T-cell (primary cell): ENCODE measurements at regions of chr15 and their contacts with region 1.

Region 1: GRCh38 chr15:38690689-38691332 is 126.2 kb upstream of the RASGRP1 start:
- DNase-seq: peak; percentile 56 to 94 (median 75)
- ATAC-seq: peak; percentile 25 to 28 (median 27)
- H3K4me3 ChIP-seq: no peak overlapping the region
- H3K4me3 Mint-ChIP-seq: peak overlapping the region in 1 of 3 donors; percentile 48
- H3K27ac ChIP-seq: no peak overlapping the region
- H3K27ac Mint-ChIP-seq: peak overlapping the region; percentile 91 to 98
- H3K4me1 ChIP-seq: peaks cover 53 to 58% of the 10 kb centered on the region in 2 experiments
- H3K4me1 Mint-ChIP-seq: peaks cover 65 to 83% (median 75%) of the 10 kb centered on the region in 3 donors
- H3K27me3 ChIP-seq: no peaks in the 10 kb centered on the region
- H3K27me3 Mint-ChIP-seq: no peaks in the 10 kb centered on the region

Region 2: GRCh38 chr15:38440353-38441129 is 250.3 kb before region 1 on chr15:
- CTCF ChIA-PET with region 1: interaction called in 1 of 2 experiments, 27 read pairs
- POLR2A ChIA-PET with region 1: interaction called in 1 of 2 experiments, 4 read pairs
- DNase-seq: peak in 34 of 35 experiments; percentile 12 to 88 (median 33)
- ATAC-seq: peak; percentile 82 to 91 (median 88)
- H3K4me3 ChIP-seq: no peak overlapping the region
- H3K4me3 Mint-ChIP-seq: no peak overlapping the region
- H3K27ac ChIP-seq: no peak overlapping the region
- H3K27ac Mint-ChIP-seq: no peak overlapping the region
- H3K4me1 ChIP-seq: peaks cover 0 to 5% of the 10 kb centered on the region in 2 experiments
- H3K4me1 Mint-ChIP-seq: peaks cover 5 to 9% (median 8%) of the 10 kb centered on the region in 3 donors
- H3K27me3 ChIP-seq: peaks cover 0 to 2% of the 10 kb centered on the region in 2 experiments
- H3K27me3 Mint-ChIP-seq: peaks cover 21 to 25% of the 10 kb centered on the region in 2 donors

Region 3: GRCh38 chr15:38521316-38521715 is 169.5 kb before region 1 on chr15:
- CTCF ChIA-PET with region 1: interaction called, 3 to 12 read pairs
- POLR2A ChIA-PET with region 1: interaction called in 1 of 2 experiments, 3 read pairs
- DNase-seq: no peak
- ATAC-seq: peak in 1 of 4 experiments; percentile 26
- H3K4me3 ChIP-seq: no peak overlapping the region
- H3K4me3 Mint-ChIP-seq: no peak overlapping the region
- H3K27ac ChIP-seq: no peak overlapping the region
- H3K27ac Mint-ChIP-seq: peak overlapping the region; percentile 66 to 84
- H3K4me1 ChIP-seq: peaks cover 0 to 3% of the 10 kb centered on the region in 2 experiments
- H3K4me1 Mint-ChIP-seq: peaks cover 46 to 62% (median 58%) of the 10 kb centered on the region in 3 donors
- H3K27me3 ChIP-seq: no peaks in the 10 kb centered on the region
- H3K27me3 Mint-ChIP-seq: no peaks in the 10 kb centered on the region

Region 4: GRCh38 chr15:38540510-38540909 is 150.3 kb before region 1 on chr15:
- CTCF ChIA-PET with region 1: interaction called, 4 to 19 read pairs
- POLR2A ChIA-PET with region 1: interaction called, 3 to 4 read pairs
- DNase-seq: no peak
- ATAC-seq: no peak
- H3K4me3 ChIP-seq: no peak overlapping the region
- H3K4me3 Mint-ChIP-seq: peak overlapping the region in 2 of 3 donors; percentile 1 to 39
- H3K27ac ChIP-seq: peak overlapping the region; percentile 38
- H3K27ac Mint-ChIP-seq: peak overlapping the region; percentile 79 to 83
- H3K4me1 ChIP-seq: peaks cover 65 to 67% of the 10 kb centered on the region in 2 experiments
- H3K4me1 Mint-ChIP-seq: peaks cover 95 to 96% (median 96%) of the 10 kb centered on the region in 3 donors
- H3K27me3 ChIP-seq: no peaks in the 10 kb centered on the region
- H3K27me3 Mint-ChIP-seq: no peaks in the 10 kb centered on the region

Region 5: DNA sequence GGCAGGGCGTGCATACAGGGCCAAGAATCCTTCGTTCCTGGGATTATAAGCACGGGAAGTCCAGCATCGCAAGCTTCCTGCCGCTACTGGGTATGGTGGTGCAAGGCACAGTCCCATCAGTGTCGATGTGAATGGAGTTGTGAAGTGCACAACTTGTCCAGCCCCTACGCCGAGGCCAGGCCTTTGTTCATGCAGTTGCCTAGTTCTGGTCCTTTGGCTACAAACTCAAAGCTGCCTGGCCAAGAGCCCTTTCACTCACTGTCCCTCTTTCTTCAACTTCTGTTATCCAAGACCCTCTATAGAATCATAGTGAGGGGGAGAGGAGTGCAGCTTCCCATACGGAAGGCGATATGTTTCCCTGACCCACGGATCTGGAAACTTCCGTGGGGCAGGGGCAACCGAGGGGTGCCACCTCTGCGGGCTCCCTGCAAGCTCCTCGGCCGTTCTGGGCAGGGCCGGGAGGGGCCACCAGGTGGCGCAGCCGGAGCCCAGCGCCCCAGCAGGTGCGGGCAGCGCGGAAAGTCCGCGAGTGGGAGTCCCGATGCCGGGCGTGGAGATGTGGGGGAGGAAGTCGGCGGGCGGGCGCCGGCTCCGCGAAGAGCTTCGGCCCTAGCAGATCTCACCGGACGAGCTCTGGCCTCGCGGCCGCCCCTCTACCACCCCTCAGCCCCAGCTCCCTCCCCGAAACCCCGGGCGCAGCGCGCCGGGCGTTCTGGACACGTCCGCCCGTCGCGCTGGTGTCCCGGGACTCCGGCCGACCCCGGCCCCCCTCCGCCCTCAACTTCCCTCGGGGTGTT is 126.9 kb before region 1 on chr15:
- CTCF ChIA-PET with region 1: interaction called, 96 to 249 read pairs
- POLR2A ChIA-PET with region 1: interaction called, 4 to 6 read pairs
- DNase-seq: peak; percentile 65 to 92 (median 82)
- ATAC-seq: peak; percentile 75 to 77 (median 76)
- H3K4me3 ChIP-seq: peak overlapping the region; percentile 90
- H3K4me3 Mint-ChIP-seq: peak overlapping the region; percentile 87 to 96 (median 88)
- H3K27ac ChIP-seq: peak overlapping the region; percentile 83
- H3K27ac Mint-ChIP-seq: peak overlapping the region; percentile 94 to 98
- H3K4me1 ChIP-seq: peaks cover 40 to 51% of the 10 kb centered on the region in 2 experiments
- H3K4me1 Mint-ChIP-seq: peaks cover 58 to 65% (median 64%) of the 10 kb centered on the region in 3 donors
- H3K27me3 ChIP-seq: no peaks in the 10 kb centered on the region
- H3K27me3 Mint-ChIP-seq: no peaks in the 10 kb centered on the region

Region 6: DNA sequence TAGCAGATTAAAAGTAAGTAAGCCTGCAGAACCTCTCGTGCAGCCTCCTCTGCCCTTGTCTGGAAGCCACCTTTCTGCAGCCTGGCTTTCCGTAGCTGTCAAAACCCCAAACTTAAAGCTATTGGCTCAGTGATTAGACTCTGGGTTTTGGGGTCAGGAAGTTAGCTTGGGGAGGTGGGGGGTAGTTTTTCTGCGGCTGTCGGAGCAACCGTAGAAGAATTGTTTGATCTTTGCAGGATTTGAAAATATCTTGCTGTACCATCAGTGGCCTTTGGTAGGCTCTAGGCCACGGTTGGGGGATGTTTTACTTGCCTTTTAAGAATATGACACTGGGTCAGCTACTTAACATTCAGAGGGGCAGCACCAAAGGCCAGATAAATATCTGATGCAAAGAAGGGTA is 37.8 kb before region 1 on chr15:
- CTCF ChIA-PET with region 1: interaction called, 12 to 90 read pairs
- POLR2A ChIA-PET with region 1: interaction called, 9 to 11 read pairs
- DNase-seq: peak; percentile 54 to 94 (median 80)
- ATAC-seq: peak; percentile 77 to 83 (median 80)
- H3K4me3 ChIP-seq: peak overlapping the region in 1 of 2 donors; percentile 20
- H3K4me3 Mint-ChIP-seq: peak overlapping the region; percentile 69 to 85 (median 78)
- H3K27ac ChIP-seq: peak overlapping the region; percentile 55
- H3K27ac Mint-ChIP-seq: peak overlapping the region; percentile 98
- H3K4me1 ChIP-seq: peaks cover 61 to 63% of the 10 kb centered on the region in 2 experiments
- H3K4me1 Mint-ChIP-seq: peaks cover 75 to 84% (median 81%) of the 10 kb centered on the region in 3 donors
- H3K27me3 ChIP-seq: no peaks in the 10 kb centered on the region
- H3K27me3 Mint-ChIP-seq: no peaks in the 10 kb centered on the region

Region 7: GRCh38 chr15:38795471-38796245 is 104.8 kb after region 1 on chr15:
- CTCF ChIA-PET with region 1: no interaction called
- POLR2A ChIA-PET with region 1: no interaction called
- DNase-seq: no peak
- ATAC-seq: no peak
- H3K4me3 ChIP-seq: no peak overlapping the region
- H3K4me3 Mint-ChIP-seq: no peak overlapping the region
- H3K27ac ChIP-seq: no peak overlapping the region
- H3K27ac Mint-ChIP-seq: no peak overlapping the region
- H3K4me1 ChIP-seq: no peaks in the 10 kb centered on the region
- H3K4me1 Mint-ChIP-seq: no peaks in the 10 kb centered on the region
- H3K27me3 ChIP-seq: no peaks in the 10 kb centered on the region
- H3K27me3 Mint-ChIP-seq: peaks cover 13 to 35% of the 10 kb centered on the region in 2 donors